ENCODE measurements at regions of chr2 and their contacts with region 1.

Region 1: GRCh38 chr2:224357098-224357901 is 44.6 kb downstream of the FAM124B start:
- DNase-seq: peak; percentile 76
- H3K4me3 Mint-ChIP-seq: no peak overlapping the region
- H3K27ac Mint-ChIP-seq: no peak overlapping the region
- H3K4me1 Mint-ChIP-seq: no peaks in the 10 kb centered on the region
- H3K27me3 Mint-ChIP-seq: no peaks in the 10 kb centered on the region

Region 2: DNA sequence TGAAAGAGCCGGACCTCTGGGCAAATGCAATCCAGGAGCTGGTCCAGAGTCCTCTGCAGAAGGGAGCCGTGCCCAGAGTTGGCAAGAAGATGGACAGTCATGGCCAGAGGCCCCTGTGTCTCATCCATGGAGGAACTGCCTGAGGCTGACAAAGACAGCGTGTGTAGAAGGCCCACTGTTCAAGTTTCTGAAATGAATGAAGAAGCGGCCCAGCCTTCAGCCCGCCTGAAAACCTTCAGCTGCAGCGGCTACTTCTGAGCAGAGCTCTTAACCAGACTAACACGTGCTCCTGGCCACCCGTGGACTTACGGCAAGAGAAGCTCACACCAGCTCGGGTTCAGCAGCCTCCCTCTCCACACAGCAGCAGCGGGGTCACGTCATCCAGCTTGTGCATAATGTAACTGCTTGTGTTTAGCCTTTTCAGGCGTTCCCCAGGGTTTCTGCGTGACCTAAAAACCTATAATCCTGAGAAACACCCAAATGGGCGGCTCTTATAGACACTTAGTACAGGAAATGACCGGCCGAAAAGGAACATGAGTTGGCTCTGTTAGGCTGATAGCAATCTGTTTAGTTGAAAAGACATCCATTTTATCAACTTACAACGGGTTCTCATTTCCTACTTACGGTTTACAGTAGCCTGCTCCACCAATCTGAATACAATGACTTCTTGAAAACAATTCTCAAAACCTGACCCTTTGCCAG is 44.5 kb after region 1 on chr2 and contains the start of gene FAM124B:
- CTCF ChIA-PET with region 1: interaction called, 5 read pairs
- intact Hi-C with region 1: loop called (anchors 1 kb)
- DNase-seq: peak; percentile 71
- H3K4me3 Mint-ChIP-seq: peak within 1 kb of the TSS; percentile 70
- H3K27ac Mint-ChIP-seq: peak within 1 kb of the TSS; percentile 46
- H3K4me1 Mint-ChIP-seq: peaks cover 13% of the 10 kb centered on the region
- H3K27me3 Mint-ChIP-seq: peaks cover 8% of the 10 kb centered on the region
- total RNA-seq, gene FAM124B: 0.32 to 0.43 TPM

Region 3: DNA sequence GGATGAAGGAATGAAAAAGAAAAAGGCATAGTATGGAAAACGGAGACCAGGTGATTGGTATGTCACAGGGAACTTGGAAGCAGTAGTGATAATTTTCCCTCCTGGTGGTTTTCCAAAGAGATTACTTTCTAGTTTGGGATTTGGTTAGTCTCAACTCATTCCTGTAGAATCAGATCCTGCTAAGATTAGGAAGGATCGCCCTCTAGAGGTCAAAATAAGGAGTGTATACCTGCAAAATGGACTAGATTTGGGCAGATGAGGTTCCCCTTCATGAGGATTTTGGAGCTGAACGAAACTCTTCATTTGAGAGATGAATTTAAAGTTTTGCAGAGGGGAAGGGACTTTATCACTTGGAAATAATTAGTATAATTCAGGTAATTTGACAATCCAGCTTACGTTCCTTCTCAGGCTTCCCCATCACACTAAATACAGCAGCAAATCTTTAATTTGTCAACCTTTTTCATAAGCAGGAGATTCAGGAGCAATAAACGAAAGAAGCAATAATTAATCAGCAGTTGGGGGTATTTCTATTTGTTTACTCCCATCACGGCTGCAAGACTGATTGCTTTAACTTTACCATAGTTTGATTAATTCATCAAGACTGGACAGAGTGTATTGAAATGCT is 293.6 kb after region 1 on chr2:
- CTCF ChIA-PET with region 1: interaction called, 9 read pairs
- intact Hi-C with region 1: loop called (anchors 1 kb)
- DNase-seq: no peak
- H3K4me3 Mint-ChIP-seq: no peak overlapping the region
- H3K27ac Mint-ChIP-seq: no peak overlapping the region
- H3K4me1 Mint-ChIP-seq: peaks cover 2% of the 10 kb centered on the region
- H3K27me3 Mint-ChIP-seq: no peaks in the 10 kb centered on the region

Region 4: DNA sequence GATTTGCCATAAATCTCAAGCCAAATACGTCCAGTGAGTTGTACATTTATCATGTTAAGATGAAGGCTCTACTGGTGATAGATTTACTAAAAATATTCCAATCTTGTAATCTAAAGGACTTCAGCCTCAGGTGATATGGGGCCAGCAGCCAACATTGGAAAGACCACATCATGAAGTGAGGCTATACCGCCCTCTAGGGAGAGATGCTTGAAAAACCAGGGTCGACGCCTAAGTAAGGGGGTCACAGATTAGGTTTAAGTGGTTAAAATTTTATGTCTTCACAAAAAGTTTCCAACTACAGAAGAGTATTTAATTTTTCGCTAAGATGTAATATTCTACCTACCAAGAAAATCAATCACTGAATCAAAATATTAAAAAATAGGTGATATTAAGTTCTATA is 651.6 kb after region 1 on chr2:
- CTCF ChIA-PET with region 1: no interaction called
- intact Hi-C with region 1: loop called (anchors 5 kb)
- DNase-seq: peak; percentile 47
- H3K4me3 Mint-ChIP-seq: no peak overlapping the region
- H3K27ac Mint-ChIP-seq: no peak overlapping the region
- H3K4me1 Mint-ChIP-seq: peaks cover 92% of the 10 kb centered on the region
- H3K27me3 Mint-ChIP-seq: no peaks in the 10 kb centered on the region

Measured in activated naive CD4-positive, alpha-beta T cell treated with anti-CD3 and anti-CD28 coated beads for 36 hours (primary cell).